Caco-2 (cell line): ENCODE measurements at regions of chr6 and their contacts with region 1.

Region 1: DNA sequence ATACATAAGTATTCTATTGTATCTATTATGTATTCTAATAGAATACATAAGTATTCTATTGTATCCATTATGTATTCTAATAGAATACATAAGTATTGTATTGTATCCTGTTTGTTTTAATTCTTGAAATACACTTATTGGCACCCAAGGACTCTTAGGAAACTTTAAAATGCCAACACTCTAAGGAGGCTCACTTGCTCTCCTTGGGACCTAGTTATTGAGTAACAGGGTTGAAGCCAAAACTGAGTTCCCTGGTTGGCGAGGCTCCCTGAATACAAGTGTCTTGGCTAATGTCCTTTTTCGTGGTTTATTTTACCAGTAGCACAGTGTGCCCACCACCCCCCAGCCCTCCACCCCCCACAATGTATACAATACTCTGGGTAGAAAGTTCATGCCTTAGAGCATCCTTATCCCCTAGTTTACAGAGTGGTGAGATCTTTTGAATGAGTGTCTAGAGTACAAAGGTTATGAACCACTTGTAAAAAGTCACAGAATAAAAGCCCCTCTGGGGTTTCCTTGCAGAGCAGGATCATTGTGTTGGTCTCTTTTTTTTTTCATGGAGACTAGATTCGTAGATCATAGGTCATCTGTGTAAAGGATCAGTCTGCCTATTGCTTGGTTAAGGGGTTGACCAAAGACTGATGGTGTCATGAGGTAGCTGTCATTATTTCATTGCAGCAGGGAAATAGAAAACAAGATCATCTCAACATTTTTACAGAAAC is 32.5 kb upstream of the PRDM1 start:
- DNase-seq: no peak
- H3K4me3 ChIP-seq: no peak overlapping the region
- H3K4me3 Mint-ChIP-seq: peak overlapping the region; percentile 56
- H3K27ac Mint-ChIP-seq: peak overlapping the region; percentile 74
- H3K4me1 ChIP-seq: peaks cover 81% of the 10 kb centered on the region
- H3K4me1 Mint-ChIP-seq: peaks cover 57% of the 10 kb centered on the region
- H3K27me3 ChIP-seq: no peaks in the 10 kb centered on the region
- H3K27me3 Mint-ChIP-seq: no peaks in the 10 kb centered on the region
- CTCF ChIP-seq: no peak

Region 2: DNA sequence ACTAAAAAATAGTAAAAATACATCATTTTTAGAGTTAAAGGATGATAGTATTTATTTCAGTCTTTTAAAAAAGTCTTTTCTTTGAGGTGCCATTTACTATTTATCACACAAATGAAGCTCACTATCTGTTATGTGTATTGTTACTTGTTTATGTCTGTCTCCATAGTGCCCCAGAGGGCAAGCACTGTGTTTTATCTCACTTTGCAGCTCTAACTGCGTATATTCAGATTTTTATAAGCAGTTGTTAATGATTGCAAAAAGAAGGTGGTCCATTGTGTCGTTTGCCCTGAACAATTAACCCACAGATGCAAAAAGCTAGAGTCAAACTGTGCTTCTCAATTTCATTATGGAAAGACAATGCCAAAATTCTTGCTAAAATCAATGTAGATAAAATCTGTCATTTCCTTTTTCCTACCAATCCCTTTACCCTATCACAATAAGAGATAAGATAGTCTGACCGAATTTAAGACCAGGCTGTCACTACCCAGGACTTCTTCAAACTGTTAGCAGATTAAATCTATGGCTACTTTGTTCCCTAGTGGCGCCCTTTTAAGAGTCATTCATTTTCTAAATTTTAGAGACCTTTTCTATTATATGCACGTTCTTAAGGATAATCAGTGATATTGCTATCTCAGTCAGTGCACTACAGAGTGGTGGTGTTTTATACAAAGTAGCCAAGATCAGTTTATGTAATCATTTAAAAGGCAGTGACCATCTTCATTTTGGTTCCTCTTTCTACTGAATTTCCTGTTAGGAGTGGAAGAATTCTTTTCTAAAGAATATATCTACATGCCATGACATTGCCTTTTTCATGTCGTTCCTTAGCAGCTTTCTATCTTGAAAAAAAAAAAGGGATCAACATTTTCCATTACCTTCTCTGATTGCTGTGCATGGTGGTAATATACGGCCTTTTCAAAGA is 100.6 kb before region 1 on chr6:
- CTCF ChIA-PET with region 1: no interaction called
- POLR2A ChIA-PET with region 1: no interaction called
- intact Hi-C with region 1: no loop called
- DNase-seq: no peak
- H3K4me3 ChIP-seq: no peak overlapping the region
- H3K4me3 Mint-ChIP-seq: no peak overlapping the region
- H3K27ac Mint-ChIP-seq: no peak overlapping the region
- H3K4me1 ChIP-seq: no peaks in the 10 kb centered on the region
- H3K4me1 Mint-ChIP-seq: peaks cover 5% of the 10 kb centered on the region
- H3K27me3 ChIP-seq: no peaks in the 10 kb centered on the region
- H3K27me3 Mint-ChIP-seq: no peaks in the 10 kb centered on the region
- CTCF ChIP-seq: no peak

Region 3: GRCh38 chr6:105992315-105992961 is 61.2 kb before region 1 on chr6:
- CTCF ChIA-PET with region 1: no interaction called
- POLR2A ChIA-PET with region 1: no interaction called
- intact Hi-C with region 1: loop called (anchors 1 kb)
- DNase-seq: peak; percentile 75 to 88
- H3K4me3 ChIP-seq: peak overlapping the region; percentile 51
- H3K4me3 Mint-ChIP-seq: peak overlapping the region; percentile 73
- H3K27ac Mint-ChIP-seq: peak overlapping the region; percentile 73
- H3K4me1 ChIP-seq: peaks cover 16% of the 10 kb centered on the region; the same call in 1 of the 2 replicates
- H3K4me1 Mint-ChIP-seq: peaks cover 33% of the 10 kb centered on the region
- H3K27me3 ChIP-seq: no peaks in the 10 kb centered on the region
- H3K27me3 Mint-ChIP-seq: no peaks in the 10 kb centered on the region
- CTCF ChIP-seq: no peak